ENCODE measurements at regions of chr5 and their contacts with region 1.

Region 1: GRCh38 chr5:140346348-140347101 is at the start of gene HBEGF:
- DNase-seq: peak; percentile 62
- ATAC-seq: peak; percentile 70
- H3K4me3 Mint-ChIP-seq: peak within 1 kb of the TSS; percentile 84
- H3K27ac Mint-ChIP-seq: peak within 1 kb of the TSS; percentile 70
- H3K4me1 Mint-ChIP-seq: peaks cover 66% of the 10 kb centered on the region
- H3K27me3 Mint-ChIP-seq: peaks cover 6% of the 10 kb centered on the region
- total RNA-seq, gene HBEGF: 12.6 to 13.5 TPM

Region 2: DNA sequence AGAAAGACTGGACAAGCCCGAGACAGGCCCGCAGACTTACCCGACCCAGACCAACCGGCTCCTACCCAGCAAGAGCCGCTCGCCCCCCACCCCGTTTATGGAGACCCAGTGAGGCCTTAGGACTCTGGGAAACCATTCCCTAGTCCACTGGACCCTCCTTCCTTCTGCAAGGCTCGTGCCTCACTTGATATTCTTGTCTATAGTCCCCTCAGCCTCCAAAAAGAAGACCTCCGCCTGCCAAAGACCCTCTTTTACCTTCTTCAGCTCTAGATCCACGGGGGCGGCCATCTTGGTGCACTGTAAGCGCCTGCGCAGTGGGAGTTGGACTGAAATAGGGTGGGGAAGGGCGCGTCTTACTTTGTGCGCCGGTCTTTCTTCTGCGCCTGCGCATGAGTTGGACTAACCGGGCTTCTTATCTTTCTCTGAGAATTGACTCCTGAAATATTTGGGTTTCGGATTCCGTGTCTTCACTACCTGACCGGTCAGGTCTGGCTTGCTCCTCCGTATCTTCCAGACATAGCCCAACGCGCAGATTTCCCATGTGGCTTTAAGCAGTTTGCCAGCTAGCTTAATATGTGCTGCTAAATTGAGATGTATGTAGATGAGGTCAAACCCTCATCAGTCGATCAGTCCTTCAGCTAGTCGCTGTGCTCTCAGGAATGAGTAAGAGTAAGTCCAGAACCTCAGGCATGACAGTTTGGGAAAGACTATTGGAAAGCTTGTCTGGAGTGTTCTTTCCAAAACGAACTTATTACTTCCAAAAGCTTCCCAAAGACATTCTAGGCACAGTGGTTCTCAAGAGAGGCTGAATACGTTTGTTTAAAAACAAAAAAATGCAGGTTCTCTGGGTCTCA is 43.5 kb before region 1 on chr5 and contains the start of gene PFDN1:
- CTCF ChIA-PET with region 1: interaction called, 27 read pairs
- POLR2A ChIA-PET with region 1: interaction called, 15 read pairs
- DNase-seq: peak; percentile 97
- ATAC-seq: peak; percentile 100
- H3K4me3 Mint-ChIP-seq: peak within 1 kb of the TSS; percentile 92
- H3K27ac Mint-ChIP-seq: peak within 1 kb of the TSS; percentile 92
- H3K4me1 Mint-ChIP-seq: peaks cover 28% of the 10 kb centered on the region
- H3K27me3 Mint-ChIP-seq: peaks cover 9% of the 10 kb centered on the region
- total RNA-seq, gene PFDN1: 62.4 to 64.7 TPM

Region 3: DNA sequence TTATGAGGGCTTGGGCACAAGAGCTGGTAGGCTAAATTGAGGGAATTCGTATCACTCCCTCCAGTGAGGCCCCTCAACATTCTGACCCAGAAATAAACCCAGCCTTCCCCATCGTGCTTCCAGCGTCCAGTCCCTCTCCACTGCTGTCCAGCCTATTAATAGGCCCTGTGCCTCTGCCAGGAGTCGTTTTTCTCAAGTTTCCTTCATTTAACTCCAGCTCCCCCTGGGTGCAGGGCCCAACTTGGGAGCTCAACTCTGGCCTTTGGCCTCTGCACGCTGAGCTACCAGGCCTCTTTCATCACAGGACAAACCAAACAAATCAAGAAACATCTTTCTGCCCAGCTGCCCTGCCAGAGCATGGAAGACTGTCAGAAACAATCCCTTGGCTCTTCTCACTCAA is 10.1 kb before region 1 on chr5:
- CTCF ChIA-PET with region 1: interaction called, 39 read pairs
- POLR2A ChIA-PET with region 1: interaction called, 3 read pairs
- DNase-seq: no peak
- ATAC-seq: no peak
- H3K4me3 Mint-ChIP-seq: no peak overlapping the region
- H3K27ac Mint-ChIP-seq: peak overlapping the region; percentile 23
- H3K4me1 Mint-ChIP-seq: peaks cover 54% of the 10 kb centered on the region
- H3K27me3 Mint-ChIP-seq: no peaks in the 10 kb centered on the region

Region 4: GRCh38 chr5:140357726-140358093 is 11.2 kb after region 1 on chr5:
- CTCF ChIA-PET with region 1: interaction called, 39 read pairs
- POLR2A ChIA-PET with region 1: no interaction called
- DNase-seq: peak; percentile 87
- ATAC-seq: peak; percentile 98
- H3K4me3 Mint-ChIP-seq: peak overlapping the region; percentile 70
- H3K27ac Mint-ChIP-seq: peak overlapping the region; percentile 73
- H3K4me1 Mint-ChIP-seq: peaks cover 15% of the 10 kb centered on the region
- H3K27me3 Mint-ChIP-seq: peaks cover 9% of the 10 kb centered on the region

Region 5: DNA sequence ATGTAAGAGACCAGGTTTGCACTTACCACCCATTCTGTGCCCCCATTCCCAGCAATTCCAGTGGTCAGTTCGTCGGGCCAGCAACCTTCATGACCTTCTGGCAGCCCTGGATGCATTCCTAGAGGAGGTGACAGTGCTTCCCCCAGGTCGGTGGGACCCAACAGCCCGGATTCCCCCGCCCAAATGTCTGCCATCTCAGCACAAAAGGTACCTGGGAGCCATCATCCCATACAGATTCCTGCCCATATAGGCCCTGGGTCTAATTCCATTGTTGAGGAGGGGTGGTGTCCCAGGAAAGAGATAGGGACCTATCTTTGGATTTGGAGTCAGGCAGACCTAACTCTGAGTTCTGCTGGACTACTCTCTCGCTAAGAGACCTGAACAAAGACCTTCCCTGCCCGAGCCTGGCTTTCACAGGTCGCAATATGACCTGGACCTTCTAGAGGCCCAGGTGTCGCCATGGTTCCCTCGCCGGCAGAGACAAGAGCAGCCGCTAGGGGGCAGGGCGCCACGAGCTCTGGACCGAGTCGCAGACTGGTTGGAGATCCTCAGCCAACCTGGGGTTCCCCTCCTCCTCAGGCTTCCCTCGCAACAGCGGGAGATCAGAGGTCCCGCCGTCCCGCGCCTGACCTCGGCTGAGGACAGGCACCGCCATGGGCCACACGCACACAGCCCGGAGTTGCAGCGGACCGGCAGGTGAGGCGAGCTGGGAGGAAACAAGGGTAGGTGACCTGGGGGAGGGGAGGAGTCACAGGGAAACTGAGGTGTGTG is 16.5 kb after region 1 on chr5:
- CTCF ChIA-PET with region 1: interaction called, 28 read pairs
- POLR2A ChIA-PET with region 1: no interaction called
- DNase-seq: peak; percentile 89
- ATAC-seq: peak; percentile 94
- H3K4me3 Mint-ChIP-seq: peak overlapping the region; percentile 71
- H3K27ac Mint-ChIP-seq: peak overlapping the region; percentile 54
- H3K4me1 Mint-ChIP-seq: peaks cover 11% of the 10 kb centered on the region
- H3K27me3 Mint-ChIP-seq: peaks cover 7% of the 10 kb centered on the region

Region 6: GRCh38 chr5:140372971-140373487 is 26.5 kb after region 1 on chr5:
- CTCF ChIA-PET with region 1: interaction called, 10 read pairs
- POLR2A ChIA-PET with region 1: no interaction called
- DNase-seq: peak; percentile 59
- ATAC-seq: peak; percentile 63
- H3K4me3 Mint-ChIP-seq: no peak overlapping the region
- H3K27ac Mint-ChIP-seq: no peak overlapping the region
- H3K4me1 Mint-ChIP-seq: peaks cover 7% of the 10 kb centered on the region
- H3K27me3 Mint-ChIP-seq: no peaks in the 10 kb centered on the region

Measured in activated CD8-positive, alpha-beta T cell treated with anti-CD3 and anti-CD28 coated beads, Interleukin-2, amount 10 ng/mL, durations not matched to agents 7 days and 5 days (primary cell).